PC-3 (cell line): ENCODE measurements at regions of chr10 and their contacts with region 1.

Region 1: DNA sequence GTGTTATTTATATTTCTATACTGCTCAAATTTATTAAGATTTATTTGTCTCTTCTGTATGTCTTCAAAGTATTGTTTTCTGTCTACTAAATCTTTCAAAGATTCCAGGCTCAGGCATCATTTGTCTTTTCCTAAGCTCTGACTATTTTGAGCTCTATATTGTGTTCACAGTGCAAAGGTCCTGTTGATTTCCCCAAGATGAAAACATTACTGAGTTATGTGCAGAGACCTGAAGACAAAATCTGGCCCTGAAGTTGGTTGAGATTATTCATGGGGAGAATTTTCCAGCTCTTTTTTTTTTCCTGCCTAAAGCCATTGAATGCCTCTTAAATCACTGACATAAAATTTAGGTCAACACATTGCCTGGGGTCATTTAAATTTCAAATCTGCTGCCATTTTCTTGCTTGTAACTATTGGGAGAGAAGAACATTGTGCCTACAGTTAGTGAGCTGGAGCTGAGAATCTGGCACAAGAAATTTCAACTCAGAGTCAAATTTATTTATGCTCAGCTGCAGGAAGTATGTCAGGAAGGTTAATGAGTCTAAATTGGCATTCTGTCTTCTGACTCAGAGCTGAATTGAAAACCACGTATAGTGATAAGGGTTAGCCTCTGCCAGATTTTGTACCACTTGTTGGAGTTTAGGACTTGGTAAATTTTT is 31.6 kb downstream of the CSTF2T start:
- DNase-seq: peak; percentile 91
- ATAC-seq: peak; percentile 99
- H3K4me3 ChIP-seq: no peak overlapping the region
- H3K27ac ChIP-seq: no peak overlapping the region
- H3K4me1 ChIP-seq: peaks cover 13% of the 10 kb centered on the region
- H3K27me3 ChIP-seq: no peaks in the 10 kb centered on the region
- CTCF ChIP-seq: no peak

Region 2: DNA sequence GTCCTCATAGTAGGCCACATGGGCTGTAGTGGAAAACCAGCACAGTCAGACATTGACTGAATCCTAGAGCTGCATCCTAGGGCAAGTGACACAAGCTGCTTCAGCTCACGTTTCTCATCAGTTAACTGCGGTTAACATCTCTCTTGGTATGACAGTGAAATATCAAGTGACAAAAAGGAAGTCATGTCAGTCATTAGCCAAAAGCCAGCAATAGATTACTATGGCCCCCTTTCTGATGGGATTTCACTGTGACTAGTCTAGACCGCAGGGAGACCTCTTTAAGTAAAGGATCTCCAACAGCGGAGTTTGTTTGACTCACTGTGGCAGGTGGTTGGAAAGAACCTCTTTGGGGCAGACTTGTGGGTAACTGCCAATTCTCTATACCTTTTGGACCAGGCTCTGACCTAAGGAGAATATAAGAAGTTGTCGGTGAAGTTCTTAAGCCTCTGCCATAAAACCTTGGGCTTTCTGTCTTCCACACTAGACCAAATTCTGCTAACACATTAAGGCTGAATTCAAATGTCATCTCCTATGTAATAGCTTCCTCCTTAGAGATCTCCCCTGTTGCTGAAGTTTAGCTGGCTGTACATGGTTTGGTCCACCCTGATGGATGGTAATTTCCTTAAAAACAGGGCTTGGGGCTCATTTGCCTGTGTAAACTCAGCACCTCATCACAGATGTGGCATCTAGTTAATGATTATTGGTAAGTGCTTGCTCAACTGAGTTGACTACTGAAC is 1159.3 kb before region 1 on chr10:
- CTCF ChIA-PET with region 1: no interaction called
- POLR2A ChIA-PET with region 1: no interaction called
- intact Hi-C with region 1: no loop called
- DNase-seq: no peak
- ATAC-seq: no peak
- H3K4me3 ChIP-seq: no peak overlapping the region
- H3K27ac ChIP-seq: no peak overlapping the region
- H3K4me1 ChIP-seq: peaks cover 39% of the 10 kb centered on the region
- H3K27me3 ChIP-seq: no peaks in the 10 kb centered on the region
- CTCF ChIP-seq: no peak

Region 3: DNA sequence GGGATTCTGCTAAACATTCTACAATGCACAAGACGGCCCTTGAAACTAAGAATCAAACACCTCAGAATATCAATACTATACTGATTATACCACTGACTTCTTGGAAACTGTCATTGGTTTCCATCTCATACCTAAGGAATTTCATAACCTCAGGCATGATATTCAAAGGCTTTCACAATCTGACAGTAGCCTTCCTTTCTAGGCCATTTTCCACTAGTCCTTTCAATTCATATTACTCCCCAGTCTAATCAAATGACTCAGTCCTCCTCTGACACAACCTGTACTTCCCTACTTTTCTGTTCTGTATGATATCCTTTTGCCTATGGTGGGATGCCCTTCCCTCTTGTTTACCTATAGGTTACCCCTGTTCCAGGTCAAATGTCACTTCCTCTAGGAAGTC is 16.7 kb before region 1 on chr10:
- CTCF ChIA-PET with region 1: no interaction called
- POLR2A ChIA-PET with region 1: interaction called, 4 read pairs
- intact Hi-C with region 1: loop called (anchors 2 kb)
- DNase-seq: peak; percentile 79
- ATAC-seq: peak; percentile 35; the same call in 1 of the 2 replicates
- H3K4me3 ChIP-seq: no peak overlapping the region
- H3K27ac ChIP-seq: no peak overlapping the region
- H3K4me1 ChIP-seq: peaks cover 13% of the 10 kb centered on the region
- H3K27me3 ChIP-seq: no peaks in the 10 kb centered on the region
- CTCF ChIP-seq: no peak